GM10248 (cell line): ENCODE measurements at regions of chr3 and their contacts with region 1.

Region 1: DNA sequence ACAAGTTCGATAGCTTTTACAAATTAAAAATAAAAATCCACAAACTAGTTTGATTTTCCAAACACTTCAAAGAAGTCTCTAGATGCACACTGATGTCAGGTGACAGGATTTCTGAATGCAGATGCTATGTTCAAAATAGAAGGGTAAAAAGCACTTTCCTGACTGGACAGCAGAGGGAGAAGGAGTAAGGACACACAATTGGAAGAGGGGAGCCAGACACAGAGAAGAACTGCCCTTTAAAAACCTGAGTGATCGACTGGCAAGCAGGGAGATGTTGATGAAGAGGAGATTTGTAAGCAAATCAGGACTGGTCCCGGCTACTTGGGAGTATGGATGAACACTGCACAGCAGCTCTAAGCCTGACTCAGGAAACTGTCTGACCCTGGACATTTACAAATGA is 612.8 kb downstream of the MAGI1 start:
- DNase-seq: no peak
- CTCF ChIP-seq: no peak

Region 2: GRCh38 chr3:65412588-65412987 is 13.3 kb before region 1 on chr3:
- CTCF ChIA-PET with region 1: interaction called, 19 read pairs
- POLR2A ChIA-PET with region 1: no interaction called
- DNase-seq: no peak
- CTCF ChIP-seq: no peak

Region 3: DNA sequence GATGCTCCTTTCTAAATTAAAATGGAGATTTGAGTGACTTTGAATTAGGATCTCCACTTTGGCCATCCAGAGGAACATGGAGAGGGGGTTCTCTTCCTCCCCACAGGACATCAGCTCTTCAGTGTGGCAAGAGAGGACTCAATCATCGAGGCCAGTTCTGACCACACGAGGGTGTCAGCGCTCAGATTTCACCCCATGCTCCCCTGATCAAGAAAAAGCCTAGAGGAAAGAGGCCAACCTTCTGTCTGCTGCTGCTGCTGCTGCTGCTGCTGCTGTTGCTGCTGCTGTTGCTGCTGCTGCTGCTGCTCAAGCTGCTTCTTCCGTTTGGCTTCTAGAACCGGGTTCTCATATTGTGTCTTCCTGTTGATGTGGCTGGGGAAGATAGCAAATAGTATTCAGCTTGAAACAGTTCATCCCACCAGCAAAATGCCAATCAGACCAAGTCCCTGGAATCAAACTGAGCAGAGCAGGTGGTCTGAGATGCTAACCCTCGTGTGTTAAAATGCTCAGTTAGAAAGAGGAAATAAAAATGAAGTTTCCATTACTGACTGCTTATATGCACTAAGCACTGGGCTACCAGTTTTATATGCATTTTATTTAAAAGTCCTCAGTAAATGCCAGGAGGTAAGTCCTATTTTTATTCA is 13.9 kb after region 1 on chr3:
- CTCF ChIA-PET with region 1: interaction called, 13 read pairs
- POLR2A ChIA-PET with region 1: no interaction called
- DNase-seq: no peak
- CTCF ChIP-seq: peak; percentile 34